ENCODE measurements at regions of chr13 and their contacts with region 1.

Region 1: DNA sequence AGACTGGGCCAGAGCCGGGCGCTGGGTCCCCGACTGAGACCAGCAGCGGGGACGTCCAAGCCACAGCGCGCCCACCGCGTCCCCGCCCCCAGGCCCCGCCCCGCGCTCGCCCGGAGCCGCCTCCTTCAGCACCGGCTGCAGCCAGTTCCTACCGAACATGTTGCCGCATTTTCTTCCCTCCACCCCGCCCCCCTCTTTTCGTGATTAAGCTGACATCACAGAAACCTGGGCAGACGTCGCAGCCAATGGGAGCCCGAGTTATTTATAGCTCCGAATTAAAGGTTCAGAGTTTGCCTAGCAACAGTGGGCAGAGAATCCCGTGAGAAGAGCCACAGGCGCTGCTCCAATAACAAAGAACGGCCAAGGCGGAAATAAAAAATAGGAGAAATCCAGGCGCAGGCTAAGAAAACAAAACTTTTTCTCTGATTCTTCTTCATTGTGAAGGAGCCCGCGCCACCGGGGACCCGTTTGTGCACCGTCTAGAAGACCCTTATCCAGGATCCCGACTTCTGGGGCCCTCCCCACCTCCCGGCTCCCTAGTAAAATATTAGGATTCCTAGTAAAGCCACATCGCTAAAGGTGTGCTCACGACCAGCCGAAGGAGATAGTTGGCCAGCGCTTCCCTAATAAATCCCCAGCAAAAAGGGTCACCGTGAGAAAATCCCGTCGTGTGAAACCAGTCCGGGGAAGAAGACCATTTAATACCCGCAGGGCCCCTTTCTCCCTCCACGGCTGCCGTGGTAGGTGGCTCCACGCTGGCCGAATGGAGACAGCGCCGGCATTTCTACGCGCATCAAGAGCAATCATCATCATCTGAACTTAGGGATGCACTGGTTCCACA is 61.7 kb downstream of the SERP2 start:
- ATAC-seq: peak; percentile 55 to 75 (median 70)
- H3K4me3 ChIP-seq: peak overlapping the region; percentile 74 to 92 (median 87)
- H3K27ac ChIP-seq: peak overlapping the region; percentile 96 to 98
- H3K4me1 ChIP-seq: peaks cover 14 to 19% of the 10 kb centered on the region in 2 donors

Region 2: GRCh38 chr13:44050450-44051063 is 384.8 kb before region 1 on chr13:
- in situ Hi-C with region 1: loop called in 3 of 9 experiments (anchors 10 to 25 kb)
- ATAC-seq: no peak
- H3K4me3 ChIP-seq: no peak overlapping the region
- H3K27ac ChIP-seq: no peak overlapping the region
- H3K4me1 ChIP-seq: peaks cover 30 to 40% of the 10 kb centered on the region in 2 donors

Region 3: DNA sequence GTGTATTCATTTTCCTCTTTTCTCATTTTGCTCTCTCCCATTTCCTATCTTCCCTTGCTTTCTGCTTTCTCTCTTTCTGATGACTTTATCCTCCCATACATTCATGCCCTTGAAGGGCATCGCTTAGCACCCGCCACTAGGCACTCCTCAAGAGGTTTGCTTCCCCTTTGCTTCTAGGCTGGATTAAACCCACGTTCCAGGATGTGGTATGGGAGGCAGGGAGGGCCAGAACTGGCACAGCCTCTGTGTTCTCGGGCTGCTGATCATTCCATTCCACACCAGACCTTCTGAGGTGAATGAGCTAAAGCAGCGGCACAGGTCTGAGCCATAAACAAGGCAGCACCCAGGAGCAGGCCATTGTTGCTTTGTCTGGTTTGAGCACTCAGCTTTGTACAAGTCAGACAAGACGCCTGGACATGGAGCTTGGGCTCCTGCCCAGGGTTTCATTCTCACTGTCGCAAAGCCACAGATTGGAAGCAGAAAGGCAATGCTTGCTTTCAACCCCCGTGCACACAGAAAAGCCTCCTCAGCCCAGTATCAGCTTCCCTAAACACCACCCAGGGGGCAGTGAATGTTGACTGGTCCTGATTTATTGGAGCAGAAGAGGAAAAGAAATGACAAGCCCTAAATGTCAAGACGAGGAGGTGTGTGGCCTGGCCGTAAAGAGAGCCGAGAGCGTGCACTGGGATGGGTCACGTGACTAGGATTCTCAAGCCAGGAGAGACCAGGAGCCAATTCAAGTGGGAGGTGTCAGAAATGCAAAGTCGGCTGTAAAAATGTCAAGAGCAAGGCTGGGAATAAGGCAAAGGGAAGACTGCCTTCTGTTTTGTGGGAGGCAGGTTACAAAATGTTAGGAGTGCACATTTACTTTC is 279.7 kb before region 1 on chr13:
- in situ Hi-C with region 1: loop called in 1 of 9 experiments (anchors 25 kb)
- ATAC-seq: peak; percentile 51 to 97 (median 85)
- H3K4me3 ChIP-seq: no peak overlapping the region
- H3K27ac ChIP-seq: peak overlapping the region in 1 of 2 donors; percentile 53
- H3K4me1 ChIP-seq: peaks cover 24 to 30% of the 10 kb centered on the region in 2 donors

Region 4: DNA sequence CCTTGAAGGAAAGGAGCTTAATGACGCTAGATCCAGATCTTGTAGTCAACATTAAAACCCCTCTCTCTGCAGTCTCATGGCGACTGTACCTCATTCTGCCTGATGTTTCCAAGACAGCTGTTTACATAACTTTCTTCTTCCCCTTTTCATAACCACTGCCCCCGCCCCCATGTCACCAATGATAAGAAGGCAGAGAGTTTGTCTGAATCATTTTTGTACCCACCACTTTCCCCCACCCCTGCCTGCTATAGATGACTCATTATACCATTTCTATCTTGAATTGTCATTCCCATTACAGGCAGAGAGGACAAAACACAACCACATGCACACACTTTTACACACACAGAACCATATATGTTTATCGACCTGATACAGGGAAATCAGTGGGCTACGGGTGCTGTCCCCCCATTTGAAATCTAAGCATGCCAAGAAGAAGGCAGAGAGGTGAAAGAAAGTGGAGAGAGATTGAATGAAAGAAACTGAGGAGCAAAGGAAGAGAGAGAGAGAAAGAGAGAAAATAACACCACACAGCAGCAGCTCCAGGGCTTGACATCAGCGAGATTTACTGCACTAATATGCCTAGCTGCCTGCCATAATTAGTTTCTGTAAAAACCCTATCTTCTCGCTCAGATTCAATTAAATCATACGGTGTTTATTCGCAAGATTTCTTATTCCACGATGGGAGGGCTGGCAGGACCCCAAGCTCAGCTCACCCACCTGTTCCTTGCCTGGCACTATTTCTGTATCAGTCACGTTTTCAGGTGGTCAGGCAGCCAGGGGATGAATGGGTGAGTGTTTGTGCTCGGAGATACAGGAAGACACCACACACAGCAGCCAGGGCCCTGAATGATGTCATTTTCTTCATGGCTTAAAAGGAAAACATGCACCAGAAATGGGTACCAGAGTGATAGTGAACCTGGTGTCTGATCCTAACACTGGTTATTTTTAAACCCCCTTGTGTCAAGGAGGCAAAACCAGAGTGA is 176.0 kb before region 1 on chr13:
- in situ Hi-C with region 1: loop called in 1 of 9 experiments (anchors 25 kb)
- ATAC-seq: peak in 5 of 8 experiments; percentile 73 to 83 (median 79)
- H3K4me3 ChIP-seq: peak overlapping the region in 1 of 5 donors; percentile 16
- H3K27ac ChIP-seq: peak overlapping the region; percentile 60 to 79
- H3K4me1 ChIP-seq: peaks cover 41 to 57% of the 10 kb centered on the region in 2 donors

Measured in motor neuron (in vitro differentiated cells).